Mammary epithelial cell (primary cell): ENCODE measurements at regions of chr1 and their contacts with region 1.

Region 1: GRCh38 chr1:65687428-65688214 is 105.1 kb upstream of the PDE4B start:
- DNase-seq: peak; percentile 41
- H3K4me3 ChIP-seq: no peak overlapping the region
- H3K27ac ChIP-seq: no peak overlapping the region
- H3K4me1 ChIP-seq: no peaks in the 10 kb centered on the region
- H3K27me3 ChIP-seq: no peaks in the 10 kb centered on the region
- CTCF ChIP-seq: peak; percentile 81 to 86

Region 2: GRCh38 chr1:64834734-64835133 is 852.9 kb before region 1 on chr1:
- CTCF ChIA-PET with region 1: interaction called, 3 read pairs
- dilution Hi-C with region 1: no loop called
- in situ Hi-C with region 1: no loop called
- intact Hi-C with region 1: loop called (anchors 10 kb)
- DNase-seq: peak; percentile 70
- H3K4me3 ChIP-seq: no peak overlapping the region
- H3K27ac ChIP-seq: no peak overlapping the region
- H3K4me1 ChIP-seq: peaks cover 5% of the 10 kb centered on the region
- H3K27me3 ChIP-seq: no peaks in the 10 kb centered on the region
- CTCF ChIP-seq: no peak

Region 3: GRCh38 chr1:65067491-65068201 is 620.0 kb before region 1 on chr1:
- CTCF ChIA-PET with region 1: no interaction called
- dilution Hi-C with region 1: no loop called
- in situ Hi-C with region 1: loop called in 1 of 2 experiments (anchors 25 kb)
- intact Hi-C with region 1: no loop called
- DNase-seq: peak; percentile 71
- H3K4me3 ChIP-seq: peak overlapping the region; percentile 65 to 80 (median 75)
- H3K27ac ChIP-seq: peak overlapping the region; percentile 18
- H3K4me1 ChIP-seq: peaks cover 14% of the 10 kb centered on the region
- H3K27me3 ChIP-seq: no peaks in the 10 kb centered on the region
- CTCF ChIP-seq: no peak

Region 4: DNA sequence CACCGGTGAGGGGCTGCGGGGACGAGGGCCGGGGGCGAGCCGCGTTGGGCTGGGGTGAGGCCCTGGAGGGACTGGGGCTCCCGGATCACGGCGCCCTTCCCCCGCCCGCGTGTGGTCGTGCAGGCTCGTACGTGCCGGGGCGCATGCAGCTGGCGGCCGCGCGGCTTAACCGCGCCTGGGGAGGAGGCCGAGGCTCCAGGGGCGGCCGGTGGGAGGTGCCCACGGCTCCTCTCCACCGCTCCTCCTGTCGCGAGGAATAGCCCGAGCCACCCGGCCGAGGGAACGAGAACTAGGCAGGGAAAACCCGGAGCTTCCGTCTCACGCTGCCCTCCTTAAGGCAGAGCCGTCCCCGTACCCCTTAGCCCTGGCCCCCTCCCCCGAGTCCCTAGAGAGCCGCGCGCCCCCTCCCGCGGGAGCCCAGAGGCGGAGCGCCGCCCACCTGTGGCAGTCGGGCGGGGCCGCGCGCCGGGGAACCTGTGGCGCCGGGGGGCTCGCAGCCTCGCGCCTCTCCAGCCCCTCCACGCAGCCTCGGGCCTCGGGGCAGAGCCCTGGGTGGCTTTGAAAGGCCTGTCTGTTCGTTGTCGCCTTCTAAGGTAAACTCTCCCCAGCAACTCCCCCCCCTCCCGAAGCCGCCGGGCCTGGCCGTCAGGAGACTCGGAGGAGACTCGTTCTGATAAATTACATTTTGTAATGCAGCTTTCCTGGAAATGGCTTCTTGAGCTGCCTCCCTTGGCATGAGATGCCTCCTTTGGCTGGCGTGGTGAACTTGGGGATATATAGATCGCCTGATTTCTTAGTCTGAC is 538.9 kb before region 1 on chr1:
- CTCF ChIA-PET with region 1: no interaction called
- dilution Hi-C with region 1: no loop called
- in situ Hi-C with region 1: no loop called
- intact Hi-C with region 1: loop called (anchors 5 kb)
- DNase-seq: peak; percentile 63
- H3K4me3 ChIP-seq: peak overlapping the region; percentile 63 to 94 (median 94)
- H3K27ac ChIP-seq: peak overlapping the region; percentile 49
- H3K4me1 ChIP-seq: peaks cover 11% of the 10 kb centered on the region
- H3K27me3 ChIP-seq: no peaks in the 10 kb centered on the region
- CTCF ChIP-seq: no peak

Region 5: DNA sequence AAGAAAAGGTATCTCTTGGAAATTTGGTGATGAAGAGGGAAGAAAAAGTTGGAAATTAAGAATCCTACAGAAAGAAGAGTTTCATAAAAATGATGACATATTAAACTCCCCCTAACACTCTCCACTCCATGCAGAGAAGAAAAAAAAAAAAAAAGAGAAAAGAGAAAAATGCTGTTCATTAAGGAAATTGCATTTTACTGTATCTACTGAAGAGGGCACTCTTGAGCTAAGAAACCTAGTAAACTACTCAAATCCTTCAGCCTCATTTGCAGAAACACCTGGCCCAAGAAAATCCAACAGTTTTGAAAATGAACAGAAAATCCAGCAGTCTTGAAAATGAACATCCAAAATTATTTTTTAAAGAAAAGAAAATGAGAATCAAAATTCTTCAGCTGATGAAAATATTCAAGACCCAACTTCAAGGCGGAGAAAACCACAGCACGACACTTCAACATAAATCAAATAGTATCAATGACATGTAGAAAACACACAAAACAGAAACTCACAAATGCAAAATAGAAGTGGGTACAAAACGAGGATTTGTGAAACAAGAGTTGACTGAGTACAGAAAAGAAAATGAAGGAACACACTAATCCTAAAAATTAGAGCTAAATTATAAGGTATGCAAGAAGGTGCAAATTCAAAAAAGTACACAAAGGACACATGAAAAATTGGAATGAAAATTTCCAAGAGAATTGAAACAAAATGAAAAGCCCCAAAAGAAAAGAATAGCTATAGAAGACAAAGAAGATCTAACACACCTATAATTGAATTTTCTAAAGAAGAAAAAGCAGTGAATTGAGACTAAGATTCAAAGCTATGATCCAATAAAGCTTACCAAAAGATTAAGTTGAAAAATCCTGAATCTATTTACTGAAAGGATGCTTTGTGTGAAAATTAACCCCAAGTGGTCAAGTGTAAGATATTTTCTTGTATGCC is 451.5 kb before region 1 on chr1:
- CTCF ChIA-PET with region 1: no interaction called
- dilution Hi-C with region 1: no loop called
- in situ Hi-C with region 1: loop called (anchors 5 to 10 kb)
- intact Hi-C with region 1: loop called (anchors 1 kb)
- DNase-seq: peak; percentile 33
- H3K4me3 ChIP-seq: no peak overlapping the region
- H3K27ac ChIP-seq: no peak overlapping the region
- H3K4me1 ChIP-seq: peaks cover under 1% of the 10 kb centered on the region
- H3K27me3 ChIP-seq: no peaks in the 10 kb centered on the region
- CTCF ChIP-seq: peak; percentile 60 to 61

Region 6: DNA sequence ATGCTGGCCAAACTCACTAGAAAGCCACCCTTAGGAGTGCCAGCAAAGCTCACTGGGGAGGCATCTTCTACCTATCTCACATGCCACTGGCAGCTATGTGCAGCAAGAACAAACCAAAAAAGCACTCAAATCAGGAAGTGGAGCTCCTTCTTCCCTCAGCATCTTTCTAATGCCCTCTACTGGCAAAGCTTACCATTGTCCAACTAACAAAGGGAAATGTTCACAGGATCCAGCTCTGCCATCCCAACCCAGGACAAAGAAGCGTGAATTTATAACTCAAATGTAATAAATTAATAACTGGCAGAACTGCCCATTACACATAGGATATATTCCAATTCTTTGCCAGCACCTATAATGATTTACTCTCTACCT is 228.2 kb before region 1 on chr1:
- CTCF ChIA-PET with region 1: interaction called, 5 read pairs
- dilution Hi-C with region 1: no loop called
- in situ Hi-C with region 1: no loop called
- intact Hi-C with region 1: loop called (anchors 1 kb)
- DNase-seq: peak; percentile 44
- H3K4me3 ChIP-seq: no peak overlapping the region
- H3K27ac ChIP-seq: no peak overlapping the region
- H3K4me1 ChIP-seq: no peaks in the 10 kb centered on the region
- H3K27me3 ChIP-seq: no peaks in the 10 kb centered on the region
- CTCF ChIP-seq: peak; percentile 57 to 79

Region 7: GRCh38 chr1:65717815-65718454 is 30.3 kb after region 1 on chr1:
- CTCF ChIA-PET with region 1: no interaction called
- dilution Hi-C with region 1: no loop called
- in situ Hi-C with region 1: no loop called
- intact Hi-C with region 1: no loop called
- DNase-seq: no peak
- H3K4me3 ChIP-seq: no peak overlapping the region
- H3K27ac ChIP-seq: no peak overlapping the region
- H3K4me1 ChIP-seq: no peaks in the 10 kb centered on the region
- H3K27me3 ChIP-seq: no peaks in the 10 kb centered on the region
- CTCF ChIP-seq: peak in 1 of 2 donors; percentile 8